PC-9 (cell line): ENCODE measurements at regions of chr16 and their contacts with region 1.

Region 1: GRCh38 chr16:2682209-2683021 is at the start of gene KCTD5:
- DNase-seq: peak; percentile 95 to 100
- H3K4me3 ChIP-seq: peak within 1 kb of the TSS; percentile 81
- H3K27ac ChIP-seq: peak within 1 kb of the TSS; percentile 72
- H3K4me1 ChIP-seq: peaks cover 33% of the 10 kb centered on the region
- H3K27me3 ChIP-seq: no peaks in the 10 kb centered on the region
- CTCF ChIP-seq: no peak
- total RNA-seq, gene KCTD5: 60.4 and 66.5 TPM in 2 replicates

Region 2: DNA sequence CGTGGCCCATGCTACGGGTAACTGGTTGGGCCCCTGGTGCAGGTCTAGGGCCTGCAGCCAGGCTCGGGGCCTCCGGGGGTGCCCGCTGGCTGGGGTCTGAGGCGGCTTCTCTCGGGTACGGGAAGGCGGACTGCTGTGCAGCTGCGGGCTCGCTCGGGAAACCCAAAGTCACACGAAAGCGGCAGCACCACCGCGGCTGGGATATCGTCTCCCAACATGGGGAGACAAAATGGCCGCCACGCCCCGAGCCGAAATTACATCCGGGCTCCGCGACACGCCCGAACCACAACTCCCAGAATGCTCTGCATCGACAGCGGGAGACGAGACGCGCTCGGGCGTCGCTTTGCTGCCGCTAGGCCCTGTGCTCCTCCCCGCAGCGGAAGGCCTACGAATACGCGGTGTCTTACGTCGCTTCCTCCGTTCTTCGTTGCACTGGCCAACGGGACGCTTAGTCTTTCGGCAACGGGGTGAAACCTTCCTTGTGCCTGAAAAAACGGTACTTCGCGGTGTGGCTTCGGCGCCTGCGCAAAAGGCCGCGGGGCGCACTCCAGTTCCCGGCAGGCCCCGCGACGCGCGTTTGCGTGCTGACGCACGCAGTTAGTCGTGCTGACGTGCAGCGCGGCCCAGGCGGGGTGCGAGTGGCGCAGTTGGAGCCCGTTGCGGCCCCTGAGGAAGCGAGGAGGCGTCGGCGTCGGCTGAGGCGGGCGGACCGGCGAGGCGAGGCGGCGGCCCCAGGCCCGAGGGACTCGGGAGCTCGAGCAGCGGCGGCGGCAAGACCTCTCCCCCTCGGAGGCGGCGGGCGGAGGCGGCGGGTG is 69.8 kb after region 1 on chr16 and contains the start of gene SRRM2:
- CTCF ChIA-PET with region 1: no interaction called
- POLR2A ChIA-PET with region 1: no interaction called
- intact Hi-C with region 1: loop called (anchors 5 kb)
- DNase-seq: peak; percentile 86 to 95
- H3K4me3 ChIP-seq: peak within 1 kb of the TSS; percentile 90
- H3K27ac ChIP-seq: peak within 1 kb of the TSS; percentile 96
- H3K4me1 ChIP-seq: peaks cover 26% of the 10 kb centered on the region
- H3K27me3 ChIP-seq: no peaks in the 10 kb centered on the region
- CTCF ChIP-seq: no peak
- total RNA-seq, gene SRRM2: 679 and 746 TPM in 2 replicates